SK-N-SH (cell line): ENCODE measurements at regions of chr11 and their contacts with region 1.

Region 1: GRCh38 chr11:110077831-110078325 is 15.3 kb upstream of the ZC3H12C start:
- DNase-seq: no peak
- H3K4me3 ChIP-seq: peak overlapping the region in 1 of 2 experiments; percentile 13; a peak in 1 of 4 replicates
- H3K27ac ChIP-seq: peak overlapping the region in 1 of 2 experiments; percentile 64; a peak in 2 of 4 replicates
- H3K4me1 ChIP-seq: peaks cover 0 to 21% of the 10 kb centered on the region in 2 experiments; a peak in 1 of 4 replicates
- H3K27me3 ChIP-seq: no peaks in the 10 kb centered on the region
- CTCF ChIP-seq: no peak
- EP300 ChIP-seq: no peak
- RAD21 ChIP-seq: no peak

Region 2: DNA sequence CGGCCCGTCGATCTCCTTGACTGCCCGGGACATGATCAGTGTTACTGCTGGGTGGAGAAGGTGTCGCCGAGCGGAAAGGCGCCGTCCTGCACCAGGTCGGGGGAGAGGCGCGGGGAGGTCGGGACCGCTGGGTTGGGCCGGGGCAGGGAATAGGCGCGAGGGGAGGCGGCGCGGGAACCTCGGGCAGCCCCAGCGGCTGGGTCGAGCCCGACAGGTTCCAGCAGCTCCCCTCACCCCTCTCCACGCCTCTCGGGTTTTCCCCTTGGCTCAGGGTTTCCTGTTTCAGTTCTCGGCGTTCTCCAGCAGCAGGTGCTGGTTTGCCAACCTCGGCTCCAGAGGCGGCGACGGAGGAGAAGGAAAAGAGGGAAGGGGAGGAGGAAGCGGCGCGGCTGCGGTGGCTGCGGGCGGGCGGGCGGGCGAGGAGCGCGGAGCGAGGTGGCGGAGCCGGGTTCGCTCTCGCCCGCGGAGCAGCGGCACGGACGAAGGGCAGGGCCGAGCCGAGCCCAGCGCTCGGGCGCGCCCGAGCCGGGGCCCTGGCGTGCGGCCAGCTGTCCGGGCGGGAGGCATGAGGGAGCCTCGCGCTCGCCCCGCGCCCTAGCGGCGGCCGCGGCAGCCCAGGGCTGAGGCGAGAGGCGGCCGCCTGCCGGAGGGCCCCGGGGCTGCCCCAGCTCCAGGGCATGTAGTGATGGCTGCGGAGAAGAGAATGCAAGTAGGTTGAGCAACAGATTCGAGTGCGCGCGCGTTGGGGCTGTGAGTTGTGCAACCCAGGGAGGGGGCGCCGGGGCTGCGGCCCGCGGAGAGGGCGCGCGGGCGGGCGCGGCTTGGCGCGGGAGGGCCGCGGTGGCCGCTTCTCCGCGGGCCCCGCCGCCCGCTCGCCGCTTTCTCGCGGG is 14.9 kb after region 1 on chr11 and contains the start of gene ZC3H12C:
- CTCF ChIA-PET with region 1: interaction called, 13 read pairs
- POLR2A ChIA-PET with region 1: no interaction called
- DNase-seq: peak; percentile 90
- H3K4me3 ChIP-seq: peak within 1 kb of the TSS; percentile 78 to 79
- H3K27ac ChIP-seq: peak within 1 kb of the TSS; percentile 83 to 89
- H3K4me1 ChIP-seq: peaks cover 5 to 9% of the 10 kb centered on the region in 2 experiments; a peak in 3 of 4 replicates
- H3K27me3 ChIP-seq: no peaks in the 10 kb centered on the region
- CTCF ChIP-seq: peak; percentile 45
- EP300 ChIP-seq: no peak
- RAD21 ChIP-seq: peak; percentile 42
- polyA plus RNA-seq, gene ZC3H12C: 2.8 and 3.9 TPM in 2 replicates